HCT116 (cell line): ENCODE measurements at regions of chr12 and their contacts with region 1.

Region 1: DNA sequence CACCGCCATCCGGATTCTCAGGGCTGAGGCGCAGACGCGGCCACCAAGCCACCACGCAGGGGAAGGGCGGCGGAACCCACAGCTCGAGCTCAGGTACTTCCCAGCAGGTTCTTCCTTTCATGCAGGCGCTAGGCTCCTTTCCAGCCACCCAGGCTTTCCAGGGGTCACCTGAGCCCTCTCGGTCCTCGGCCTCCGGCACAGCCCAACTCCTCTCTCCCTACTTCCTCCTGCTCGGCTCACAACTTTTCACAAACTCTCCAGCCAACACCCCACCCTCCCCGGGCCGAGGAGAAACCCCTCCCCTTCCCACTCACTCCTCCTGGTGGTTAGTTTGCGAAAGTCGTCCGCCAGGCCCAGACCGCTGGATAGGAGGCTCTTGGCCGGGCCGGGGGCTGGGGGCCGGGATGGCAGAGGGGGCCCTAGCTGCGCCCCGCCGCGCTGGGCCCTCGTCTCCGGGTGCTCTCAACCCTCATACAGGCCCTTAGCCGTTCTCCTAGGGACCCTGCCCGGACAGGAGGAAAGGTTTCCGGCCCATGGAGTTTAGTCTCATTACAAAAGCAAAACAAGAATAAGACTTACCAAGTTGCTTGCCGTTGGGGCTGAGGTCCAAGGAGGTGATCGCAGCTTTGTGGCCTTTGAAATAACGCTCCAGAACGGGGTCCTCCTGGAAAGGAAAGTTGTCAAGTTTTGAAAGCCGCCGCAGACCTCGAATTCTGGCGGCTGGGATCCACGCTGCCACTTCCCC is at the start of gene GALNT4:
- DNase-seq: peak; percentile 62
- ATAC-seq: peak; percentile 83
- H3K4me3 ChIP-seq: peak within 1 kb of the TSS; percentile 81 to 86
- H3K27ac ChIP-seq: peak within 1 kb of the TSS; percentile 72
- H3K4me1 ChIP-seq: peaks cover 4 to 17% of the 10 kb centered on the region in 2 experiments; a peak in 3 of 4 replicates
- H3K27me3 ChIP-seq: no peaks in the 10 kb centered on the region
- CTCF ChIP-seq: peak; percentile 63 to 67 (median 65); a peak in 5 of 6 replicates
- POLR2A ChIP-seq: no peak
- RAD21 ChIP-seq: peak; percentile 60
- total RNA-seq, gene GALNT4: 2.8 TPM

Region 2: DNA sequence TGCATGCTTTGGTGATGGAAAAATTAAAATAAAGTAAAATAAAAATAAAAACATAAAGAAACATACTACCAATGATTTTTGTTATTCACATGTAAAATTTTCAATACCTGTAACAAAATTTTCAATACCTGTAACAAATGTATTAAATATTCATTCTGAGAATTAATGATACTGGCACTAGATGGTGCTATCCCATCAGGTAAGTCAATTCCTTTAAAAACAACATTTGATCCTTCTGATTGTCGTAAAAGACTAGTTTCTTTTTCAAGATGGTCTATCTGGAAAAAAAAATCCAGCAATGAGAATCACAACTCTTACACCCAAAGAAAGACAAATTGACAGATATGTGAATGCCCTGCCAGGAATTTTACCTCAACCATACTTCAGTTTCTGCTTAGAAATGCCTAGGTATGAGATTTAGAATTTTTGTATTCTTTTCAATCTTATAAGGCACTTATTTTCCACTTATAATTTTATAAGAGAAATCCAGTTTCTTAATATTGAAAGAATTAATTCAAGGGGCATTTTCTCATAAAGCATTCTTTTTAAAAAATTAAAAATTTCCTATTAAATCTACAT is 1413.5 kb before region 1 on chr12:
- CTCF ChIA-PET with region 1: no interaction called
- POLR2A ChIA-PET with region 1: no interaction called
- RAD21 ChIA-PET with region 1: no interaction called
- intact Hi-C with region 1: loop called (anchors 5 kb)
- DNase-seq: peak; percentile 38
- ATAC-seq: no peak
- H3K4me3 ChIP-seq: no peak overlapping the region
- H3K27ac ChIP-seq: no peak overlapping the region; the same call in 1 of the 2 replicates
- H3K4me1 ChIP-seq: 0 out of 4 replicates have a peak, but pooled peaks cover 0 to 3% of the 10 kb centered on the region in 2 experiments
- H3K27me3 ChIP-seq: no peaks in the 10 kb centered on the region
- CTCF ChIP-seq: peak; percentile 31 to 57 (median 35); a peak in 4 of 6 replicates
- POLR2A ChIP-seq: no peak
- RAD21 ChIP-seq: peak; percentile 82

Region 3: GRCh38 chr12:89019408-89020120 is 505.1 kb before region 1 on chr12:
- CTCF ChIA-PET with region 1: interaction called, 10 read pairs
- POLR2A ChIA-PET with region 1: interaction called, 3 read pairs
- RAD21 ChIA-PET with region 1: interaction called in 1 of 2 experiments, 4 read pairs
- intact Hi-C with region 1: loop called (anchors 1 kb)
- DNase-seq: peak; percentile 83
- ATAC-seq: peak; percentile 90
- H3K4me3 ChIP-seq: peak overlapping the region; percentile 15 to 40
- H3K27ac ChIP-seq: no peak overlapping the region
- H3K4me1 ChIP-seq: peaks cover 2 to 30% of the 10 kb centered on the region in 2 experiments; a peak in 3 of 4 replicates
- H3K27me3 ChIP-seq: no peaks in the 10 kb centered on the region
- CTCF ChIP-seq: peak; percentile 72 to 88 (median 82)
- POLR2A ChIP-seq: no peak
- RAD21 ChIP-seq: peak; percentile 95

Region 4: GRCh38 chr12:89051065-89051677 is 473.5 kb before region 1 on chr12:
- CTCF ChIA-PET with region 1: no interaction called
- POLR2A ChIA-PET with region 1: no interaction called
- RAD21 ChIA-PET with region 1: no interaction called
- intact Hi-C with region 1: loop called (anchors 2 kb)
- DNase-seq: peak; percentile 70
- ATAC-seq: peak; percentile 85
- H3K4me3 ChIP-seq: no peak overlapping the region
- H3K27ac ChIP-seq: no peak overlapping the region
- H3K4me1 ChIP-seq: no peaks in the 10 kb centered on the region
- H3K27me3 ChIP-seq: no peaks in the 10 kb centered on the region
- CTCF ChIP-seq: peak; percentile 86 to 95 (median 92)
- POLR2A ChIP-seq: no peak
- RAD21 ChIP-seq: peak; percentile 97

Region 5: GRCh38 chr12:89470741-89471509 is 53.8 kb before region 1 on chr12:
- CTCF ChIA-PET with region 1: interaction called, 6 read pairs
- POLR2A ChIA-PET with region 1: no interaction called
- RAD21 ChIA-PET with region 1: no interaction called
- intact Hi-C with region 1: loop called (anchors 1 kb)
- DNase-seq: peak; percentile 42
- ATAC-seq: peak; percentile 83
- H3K4me3 ChIP-seq: no peak overlapping the region
- H3K27ac ChIP-seq: no peak overlapping the region
- H3K4me1 ChIP-seq: no peaks in the 10 kb centered on the region
- H3K27me3 ChIP-seq: no peaks in the 10 kb centered on the region
- CTCF ChIP-seq: peak; percentile 56 to 72 (median 66)
- POLR2A ChIP-seq: no peak
- RAD21 ChIP-seq: peak; percentile 71

Region 6: GRCh38 chr12:89504560-89505346 is 20.0 kb before region 1 on chr12:
- CTCF ChIA-PET with region 1: no interaction called
- POLR2A ChIA-PET with region 1: no interaction called
- RAD21 ChIA-PET with region 1: no interaction called
- intact Hi-C with region 1: no loop called
- DNase-seq: no peak
- ATAC-seq: peak; percentile 44; the same call in 1 of the 2 replicates
- H3K4me3 ChIP-seq: no peak overlapping the region
- H3K27ac ChIP-seq: no peak overlapping the region
- H3K4me1 ChIP-seq: peaks cover 0 to 3% of the 10 kb centered on the region in 2 experiments; a peak in 1 of 4 replicates
- H3K27me3 ChIP-seq: no peaks in the 10 kb centered on the region
- CTCF ChIP-seq: peak in 1 of 3 experiments; percentile 12; a peak in 1 of 6 replicates
- POLR2A ChIP-seq: no peak
- RAD21 ChIP-seq: no peak